GM12878 (cell line): ENCODE measurements at regions of chrX and their contacts with region 1.

Region 1: GRCh38 chrX:106397801-106398538 is 213.8 kb upstream of the RADX start:
- DNase-seq: no peak
- ATAC-seq: peak; percentile 46; the same call in 2 of the 3 replicates
- H3K4me3 ChIP-seq: no peak overlapping the region
- H3K27ac ChIP-seq: no peak overlapping the region
- H3K4me1 ChIP-seq: no peaks in the 10 kb centered on the region
- H3K27me3 ChIP-seq: no peaks in the 10 kb centered on the region
- CTCF ChIP-seq: peak in 2 of 3 experiments; percentile 13 to 25; a peak in 1 of 6 replicates
- EP300 ChIP-seq: no peak
- POLR2A ChIP-seq: no peak
- RAD21 ChIP-seq: peak; percentile 48

Region 2: GRCh38 chrX:105876658-105877057 is 521.3 kb before region 1 on chrX:
- CTCF ChIA-PET with region 1: no interaction called
- POLR2A ChIA-PET with region 1: no interaction called
- RAD21 ChIA-PET with region 1: no interaction called
- SMC1A ChIA-PET with region 1: no interaction called
- in situ Hi-C with region 1: no loop called
- intact Hi-C with region 1: loop called (anchors 5 kb)
- DNase-seq: no peak
- ATAC-seq: peak; percentile 58; the same call in 2 of the 3 replicates
- H3K4me3 ChIP-seq: no peak overlapping the region
- H3K27ac ChIP-seq: no peak overlapping the region
- H3K4me1 ChIP-seq: no peaks in the 10 kb centered on the region
- H3K27me3 ChIP-seq: no peaks in the 10 kb centered on the region
- CTCF ChIP-seq: peak; percentile 35 to 45 (median 40); a peak in 5 of 6 replicates
- EP300 ChIP-seq: no peak
- POLR2A ChIP-seq: no peak
- RAD21 ChIP-seq: peak; percentile 35

Region 3: DNA sequence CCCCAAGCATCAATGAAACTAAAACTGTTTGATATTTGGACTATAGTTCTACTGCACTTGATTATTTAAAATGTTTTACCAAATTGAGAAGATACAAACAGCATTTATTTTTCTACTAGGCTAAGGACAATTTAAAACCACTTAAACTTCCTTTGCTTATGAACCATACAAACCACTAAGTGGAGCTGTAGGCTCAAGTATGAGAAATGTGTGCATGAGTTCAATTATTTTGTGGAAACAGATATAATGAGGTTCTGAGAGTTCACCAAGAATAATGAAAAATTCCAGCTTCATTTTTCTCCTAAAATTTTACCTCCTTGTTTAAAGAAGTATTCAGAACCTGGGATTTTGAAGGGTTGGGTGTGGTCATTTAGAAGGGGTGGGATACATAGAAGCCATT is 422.6 kb before region 1 on chrX:
- CTCF ChIA-PET with region 1: no interaction called
- POLR2A ChIA-PET with region 1: no interaction called
- RAD21 ChIA-PET with region 1: no interaction called
- SMC1A ChIA-PET with region 1: no interaction called
- in situ Hi-C with region 1: no loop called
- intact Hi-C with region 1: loop called (anchors 5 kb)
- DNase-seq: no peak
- ATAC-seq: no peak
- H3K4me3 ChIP-seq: no peak overlapping the region
- H3K27ac ChIP-seq: no peak overlapping the region
- H3K4me1 ChIP-seq: no peaks in the 10 kb centered on the region
- H3K27me3 ChIP-seq: no peaks in the 10 kb centered on the region
- CTCF ChIP-seq: no peak; a peak in 1 of 6 replicates
- EP300 ChIP-seq: no peak
- POLR2A ChIP-seq: no peak
- RAD21 ChIP-seq: peak; percentile 38; the same call in 1 of the 2 replicates

Region 4: GRCh38 chrX:106039920-106040319 is 358.1 kb before region 1 on chrX:
- CTCF ChIA-PET with region 1: no interaction called
- POLR2A ChIA-PET with region 1: no interaction called
- RAD21 ChIA-PET with region 1: no interaction called
- SMC1A ChIA-PET with region 1: no interaction called
- in situ Hi-C with region 1: no loop called
- intact Hi-C with region 1: loop called (anchors 5 kb)
- DNase-seq: no peak
- ATAC-seq: no peak
- H3K4me3 ChIP-seq: no peak overlapping the region
- H3K27ac ChIP-seq: no peak overlapping the region
- H3K4me1 ChIP-seq: no peaks in the 10 kb centered on the region
- H3K27me3 ChIP-seq: no peaks in the 10 kb centered on the region; a peak in 1 of 4 replicates
- CTCF ChIP-seq: peak; percentile 3 to 27 (median 17); a peak in 2 of 6 replicates
- EP300 ChIP-seq: no peak
- POLR2A ChIP-seq: no peak
- RAD21 ChIP-seq: no peak

Region 5: GRCh38 chrX:106170318-106170717 is 227.7 kb before region 1 on chrX:
- CTCF ChIA-PET with region 1: no interaction called
- POLR2A ChIA-PET with region 1: no interaction called
- RAD21 ChIA-PET with region 1: interaction called, 3 read pairs
- SMC1A ChIA-PET with region 1: no interaction called
- in situ Hi-C with region 1: no loop called
- intact Hi-C with region 1: loop called (anchors 2 kb)
- DNase-seq: no peak
- ATAC-seq: 0 out of 3 replicates have a peak, but pooled peaks have one; percentile 34
- H3K4me3 ChIP-seq: no peak overlapping the region
- H3K27ac ChIP-seq: no peak overlapping the region
- H3K4me1 ChIP-seq: no peaks in the 10 kb centered on the region
- H3K27me3 ChIP-seq: no peaks in the 10 kb centered on the region
- CTCF ChIP-seq: peak; percentile 33 to 36 (median 33); a peak in 5 of 6 replicates
- EP300 ChIP-seq: no peak
- POLR2A ChIP-seq: no peak
- RAD21 ChIP-seq: 0 out of 2 replicates have a peak, but pooled peaks have one; percentile 19